ENCODE measurements at regions of chr1 and their contacts with region 1.

Region 1: GRCh38 chr1:21261551-21262281 is 28.5 kb downstream of the ECE1 start:
- DNase-seq: peak; percentile 38 to 74
- ATAC-seq: peak; percentile 69 to 81
- H3K4me3 ChIP-seq: peak overlapping the region in 2 of 4 donors; percentile 19 to 30
- H3K27ac ChIP-seq: peak overlapping the region; percentile 83 to 90 (median 86)
- H3K4me1 ChIP-seq: peaks cover 30 to 35% of the 10 kb centered on the region in 2 donors
- H3K27me3 ChIP-seq: no peaks in the 10 kb centered on the region
- CTCF ChIP-seq: no peak
- POLR2A ChIP-seq: peak; percentile 16 to 36

Region 2: DNA sequence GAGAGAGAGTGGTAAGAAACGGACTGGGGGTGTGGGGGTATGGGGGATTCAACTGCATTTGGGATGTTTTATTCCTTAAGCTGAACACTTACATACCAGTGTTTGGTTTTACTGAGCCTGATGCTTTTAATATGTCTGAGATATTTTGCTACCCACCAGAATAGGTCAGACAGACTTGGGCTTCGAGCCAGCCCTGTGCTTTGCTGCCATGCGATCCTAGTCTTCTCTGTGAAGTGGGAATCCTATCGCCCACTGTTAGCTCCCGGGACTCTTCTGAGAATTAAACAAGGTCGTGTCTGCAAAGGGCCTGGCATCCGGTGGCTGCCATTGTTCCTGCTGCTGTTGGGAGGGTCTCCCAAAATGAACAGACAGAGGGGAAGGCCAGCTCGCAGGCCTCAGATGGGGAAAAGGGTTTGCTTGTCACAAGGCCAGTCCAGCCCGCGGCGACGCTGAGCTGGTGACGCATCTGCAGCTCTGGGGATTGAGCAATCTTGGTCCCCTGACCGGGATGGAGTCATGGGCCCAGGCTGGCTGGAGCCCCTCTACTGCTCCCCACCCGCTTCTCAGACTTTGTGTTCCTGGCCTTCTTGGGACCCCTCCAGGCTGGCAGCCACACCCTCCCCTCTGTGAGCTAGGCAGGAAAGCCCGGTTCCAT is 55.4 kb after region 1 on chr1:
- in situ Hi-C with region 1: no loop called
- intact Hi-C with region 1: loop called (anchors 2 kb)
- DNase-seq: peak; percentile 74 to 82
- ATAC-seq: peak; percentile 70 to 74
- H3K4me3 ChIP-seq: no peak overlapping the region
- H3K27ac ChIP-seq: peak overlapping the region; percentile 76 to 82 (median 80)
- H3K4me1 ChIP-seq: peaks cover 22 to 28% of the 10 kb centered on the region in 2 donors
- H3K27me3 ChIP-seq: no peaks in the 10 kb centered on the region
- CTCF ChIP-seq: no peak
- POLR2A ChIP-seq: peak in 1 of 2 donors; percentile 33

Region 3: GRCh38 chr1:21344750-21345443 is 83.2 kb after region 1 on chr1:
- in situ Hi-C with region 1: no loop called
- intact Hi-C with region 1: loop called (anchors 5 kb)
- DNase-seq: no peak
- ATAC-seq: peak; percentile 8 to 32
- H3K4me3 ChIP-seq: peak overlapping the region; percentile 71 to 97 (median 77)
- H3K27ac ChIP-seq: peak overlapping the region; percentile 67 to 89 (median 76)
- H3K4me1 ChIP-seq: peaks cover 2 to 13% of the 10 kb centered on the region in 2 donors
- H3K27me3 ChIP-seq: no peaks in the 10 kb centered on the region
- CTCF ChIP-seq: no peak
- POLR2A ChIP-seq: no peak

Measured in gastrocnemius medialis (tissue), 4 donors.